CD14-positive monocyte (primary cell): ENCODE measurements at regions of chr11 and their contacts with region 1.

Region 1: GRCh38 chr11:124961972-124962609 is 8.1 kb downstream of the CCDC15 start:
- DNase-seq: peak; percentile 53 to 80 (median 68)
- H3K4me3 ChIP-seq: no peak overlapping the region
- H3K4me3 Mint-ChIP-seq: no peak overlapping the region
- H3K27ac ChIP-seq: no peak overlapping the region
- H3K27ac Mint-ChIP-seq: no peak overlapping the region
- H3K4me1 ChIP-seq: no peaks in the 10 kb centered on the region
- H3K4me1 Mint-ChIP-seq: peaks cover 4% of the 10 kb centered on the region
- H3K27me3 ChIP-seq: no peaks in the 10 kb centered on the region
- H3K27me3 Mint-ChIP-seq: peaks cover 0 to 2% (median 0%) of the 10 kb centered on the region in 3 donors
- CTCF ChIP-seq: peak; percentile 79

Region 2: GRCh38 chr11:125141686-125142535 is 179.8 kb after region 1 on chr11:
- intact Hi-C with region 1: loop called (anchors 1 to 2 kb)
- DNase-seq: peak; percentile 19 to 49 (median 46)
- H3K4me3 ChIP-seq: no peak overlapping the region
- H3K4me3 Mint-ChIP-seq: peak overlapping the region in 1 of 2 donors; percentile 57
- H3K27ac ChIP-seq: no peak overlapping the region
- H3K27ac Mint-ChIP-seq: peak overlapping the region in 1 of 7 donors; percentile 64
- H3K4me1 ChIP-seq: peaks cover 2 to 6% of the 10 kb centered on the region in 2 donors
- H3K4me1 Mint-ChIP-seq: peaks cover 4% of the 10 kb centered on the region
- H3K27me3 ChIP-seq: peaks cover 0 to 13% of the 10 kb centered on the region in 2 donors
- H3K27me3 Mint-ChIP-seq: peaks cover 18 to 30% (median 27%) of the 10 kb centered on the region in 3 donors
- CTCF ChIP-seq: peak; percentile 100

Region 3: GRCh38 chr11:125343718-125344131 is 381.6 kb after region 1 on chr11:
- intact Hi-C with region 1: loop called in 1 of 2 experiments (anchors 5 kb)
- DNase-seq: no peak
- H3K4me3 ChIP-seq: no peak overlapping the region
- H3K4me3 Mint-ChIP-seq: no peak overlapping the region
- H3K27ac ChIP-seq: no peak overlapping the region
- H3K27ac Mint-ChIP-seq: no peak overlapping the region
- H3K4me1 ChIP-seq: no peaks in the 10 kb centered on the region
- H3K4me1 Mint-ChIP-seq: no peaks in the 10 kb centered on the region
- H3K27me3 ChIP-seq: no peaks in the 10 kb centered on the region
- H3K27me3 Mint-ChIP-seq: peaks cover 9 to 26% (median 10%) of the 10 kb centered on the region in 3 donors
- CTCF ChIP-seq: no peak